AG04450 (cell line): ENCODE measurements at regions of chr7 and their contacts with region 1.

Region 1: DNA sequence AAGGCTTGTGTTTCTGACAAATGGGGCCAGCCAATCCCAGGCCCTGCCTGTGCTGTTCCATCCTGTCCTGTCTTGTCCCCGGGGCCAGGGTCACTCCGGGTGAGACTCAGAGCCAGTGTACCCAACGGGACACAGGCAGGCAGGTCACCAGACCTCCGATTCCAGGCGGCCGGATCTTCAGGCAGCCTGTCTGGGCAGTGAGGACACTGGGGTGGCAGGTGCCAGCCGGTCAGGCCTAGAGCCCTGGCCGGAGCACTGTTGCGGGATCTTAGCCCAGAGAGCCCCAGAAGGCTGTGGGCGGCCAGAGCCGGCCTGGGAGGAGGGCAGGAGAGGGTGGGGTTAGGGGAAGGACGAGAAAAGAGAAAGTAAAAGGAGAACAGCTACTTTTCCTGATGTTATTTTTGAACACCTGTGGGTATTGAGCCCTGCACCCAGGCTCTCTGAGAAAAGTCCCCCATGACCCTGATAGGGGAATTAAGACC is 134.3 kb upstream of the TNRC18 start:
- DNase-seq: no peak
- H3K4me3 ChIP-seq: no peak overlapping the region
- H3K27ac ChIP-seq: peak overlapping the region; percentile 65
- H3K27me3 ChIP-seq: no peaks in the 10 kb centered on the region
- CTCF ChIP-seq: no peak

Region 2: GRCh38 chr7:5494683-5495561 is 63.0 kb before region 1 on chr7:
- CTCF ChIA-PET with region 1: interaction called, 45 read pairs
- POLR2A ChIA-PET with region 1: interaction called, 3 read pairs
- DNase-seq: no peak
- H3K4me3 ChIP-seq: no peak overlapping the region
- H3K27ac ChIP-seq: peak overlapping the region; percentile 31
- H3K27me3 ChIP-seq: no peaks in the 10 kb centered on the region
- CTCF ChIP-seq: peak; percentile 98

Region 3: DNA sequence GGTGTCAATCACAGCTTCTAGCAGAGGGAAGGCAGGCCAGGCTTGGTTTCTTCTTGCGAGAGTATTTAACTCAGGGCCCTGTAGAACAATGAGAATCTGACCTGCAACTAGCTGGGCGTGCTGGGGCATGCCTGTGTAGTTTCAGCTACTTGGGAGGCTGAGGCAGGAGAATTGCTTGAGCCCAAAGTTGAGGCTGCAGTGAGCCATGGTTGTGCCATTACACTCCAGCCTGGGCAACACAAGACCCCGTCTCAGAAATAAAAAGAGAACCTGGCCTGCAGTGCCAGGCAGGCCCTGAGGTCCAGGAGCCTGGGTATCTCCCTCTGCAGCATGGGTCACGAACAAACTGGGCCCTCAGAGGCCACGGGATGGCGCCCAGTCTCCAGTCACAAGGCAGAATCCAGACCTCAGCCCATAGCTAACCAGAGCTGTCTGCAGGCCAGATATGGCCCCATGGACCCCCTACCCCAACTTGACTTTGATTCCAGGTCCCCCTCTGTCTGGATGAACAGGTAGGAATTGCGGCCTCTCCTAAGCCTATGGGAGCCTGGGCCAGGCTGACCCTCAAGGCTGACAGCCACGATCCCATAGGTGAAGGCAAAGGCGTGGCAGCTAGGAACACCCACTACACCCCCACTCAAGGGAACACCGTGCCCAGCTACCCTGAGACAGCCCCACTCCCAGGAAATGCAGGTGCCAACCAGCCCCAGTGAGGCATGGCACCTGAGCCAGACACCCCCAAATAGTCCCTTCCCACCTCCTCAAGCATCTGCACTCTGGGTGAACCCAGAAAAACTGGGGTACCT is 31.7 kb before region 1 on chr7:
- CTCF ChIA-PET with region 1: interaction called, 3 read pairs
- POLR2A ChIA-PET with region 1: interaction called, 40 read pairs
- DNase-seq: no peak
- H3K4me3 ChIP-seq: peak overlapping the region; percentile 76
- H3K27ac ChIP-seq: peak overlapping the region; percentile 83
- H3K27me3 ChIP-seq: no peaks in the 10 kb centered on the region
- CTCF ChIP-seq: no peak